Panc1 (cell line): ENCODE measurements at regions of chr19 and their contacts with region 1.

Region 1: GRCh38 chr19:41801792-41802211 is 5.4 kb downstream of the CEACAM3 start:
- DNase-seq: no peak
- ATAC-seq: no peak
- H3K4me3 ChIP-seq: no peak overlapping the region
- H3K27ac ChIP-seq: no peak overlapping the region
- H3K4me1 ChIP-seq: no peaks in the 10 kb centered on the region
- H3K27me3 ChIP-seq: no peaks in the 10 kb centered on the region
- CTCF ChIP-seq: no peak

Region 2: GRCh38 chr19:41641879-41642485 is 159.8 kb before region 1 on chr19:
- CTCF ChIA-PET with region 1: no interaction called
- POLR2A ChIA-PET with region 1: no interaction called
- in situ Hi-C with region 1: no loop called
- intact Hi-C with region 1: no loop called
- DNase-seq: peak; percentile 33
- ATAC-seq: peak; percentile 94
- H3K4me3 ChIP-seq: no peak overlapping the region
- H3K27ac ChIP-seq: no peak overlapping the region
- H3K4me1 ChIP-seq: no peaks in the 10 kb centered on the region
- H3K27me3 ChIP-seq: no peaks in the 10 kb centered on the region
- CTCF ChIP-seq: peak; percentile 89

Region 3: DNA sequence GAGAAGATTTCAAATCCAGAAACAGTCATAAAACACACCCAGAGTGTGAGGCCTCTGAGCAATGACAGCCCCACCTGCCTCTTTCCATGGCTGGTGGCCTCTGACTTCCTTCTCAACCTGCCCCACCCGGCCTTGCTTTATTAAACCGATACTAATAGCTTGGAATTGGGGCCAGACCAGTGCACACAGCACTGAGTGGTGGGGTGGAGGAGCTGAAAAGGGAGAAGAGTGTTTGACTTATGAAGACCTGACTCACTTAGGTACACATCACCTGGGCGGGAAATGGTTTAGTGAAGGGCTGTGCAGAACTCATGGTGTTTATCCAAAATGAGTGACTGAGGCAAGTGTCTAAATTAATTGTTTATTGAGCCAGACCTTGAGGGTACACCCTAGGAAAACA is 67.2 kb before region 1 on chr19:
- CTCF ChIA-PET with region 1: interaction called, 11 read pairs
- POLR2A ChIA-PET with region 1: no interaction called
- in situ Hi-C with region 1: no loop called
- intact Hi-C with region 1: no loop called
- DNase-seq: no peak
- ATAC-seq: no peak
- H3K4me3 ChIP-seq: no peak overlapping the region
- H3K27ac ChIP-seq: no peak overlapping the region
- H3K4me1 ChIP-seq: no peaks in the 10 kb centered on the region
- H3K27me3 ChIP-seq: peaks cover 7% of the 10 kb centered on the region; the same call in 1 of the 2 replicates
- CTCF ChIP-seq: no peak